Activated CD4-positive, alpha-beta memory T cell treated with anti-CD3 and anti-CD28 coated beads for 36 hours (primary cell): ENCODE measurements at regions of chr1 and their contacts with region 1.

Region 1: DNA sequence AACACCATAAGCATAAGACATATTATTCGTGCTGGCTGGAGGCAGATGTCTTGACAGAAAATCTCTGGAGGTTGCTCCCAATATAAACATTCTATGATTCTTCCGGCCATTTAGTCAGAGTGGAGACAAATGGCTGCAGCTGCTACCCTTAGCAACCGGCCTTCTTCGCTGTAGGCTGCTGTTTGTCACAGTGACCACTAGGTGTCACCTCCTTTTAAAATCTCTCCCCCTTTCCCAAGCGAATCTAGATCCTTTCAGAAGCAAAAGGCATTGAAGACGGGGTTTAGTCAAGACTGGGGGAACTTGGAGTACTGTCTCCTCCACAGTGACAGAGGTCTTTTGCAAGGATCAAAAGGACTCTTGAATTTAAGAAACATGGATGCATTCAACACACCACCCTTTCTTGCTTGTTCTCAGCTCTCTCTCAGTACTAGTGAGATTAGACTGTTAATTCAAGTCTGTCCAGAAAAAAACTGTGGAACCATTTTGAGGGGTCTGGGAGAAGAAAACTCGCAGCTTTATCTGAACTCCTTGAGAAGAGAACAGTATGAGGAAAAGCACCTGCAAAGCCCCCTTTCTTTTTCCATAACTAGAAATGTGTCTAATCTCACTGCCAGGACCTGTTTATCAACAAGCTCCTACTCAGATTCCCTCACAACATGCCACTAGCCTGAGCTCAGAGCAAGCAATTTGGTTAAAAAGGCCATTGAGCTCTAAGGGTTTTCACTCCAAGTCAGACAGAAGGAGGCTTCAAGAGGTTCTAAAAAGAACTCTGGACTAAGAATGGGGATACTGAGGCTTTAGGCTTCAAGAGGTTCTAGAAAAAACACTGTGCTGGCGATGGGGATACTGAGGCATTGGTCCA is 408.3 kb upstream of the PLXNA2 start:
- DNase-seq: peak; percentile 34
- H3K4me3 Mint-ChIP-seq: no peak overlapping the region
- H3K27ac Mint-ChIP-seq: no peak overlapping the region
- H3K4me1 Mint-ChIP-seq: no peaks in the 10 kb centered on the region
- H3K27me3 Mint-ChIP-seq: peaks cover 24% of the 10 kb centered on the region

Region 2: DNA sequence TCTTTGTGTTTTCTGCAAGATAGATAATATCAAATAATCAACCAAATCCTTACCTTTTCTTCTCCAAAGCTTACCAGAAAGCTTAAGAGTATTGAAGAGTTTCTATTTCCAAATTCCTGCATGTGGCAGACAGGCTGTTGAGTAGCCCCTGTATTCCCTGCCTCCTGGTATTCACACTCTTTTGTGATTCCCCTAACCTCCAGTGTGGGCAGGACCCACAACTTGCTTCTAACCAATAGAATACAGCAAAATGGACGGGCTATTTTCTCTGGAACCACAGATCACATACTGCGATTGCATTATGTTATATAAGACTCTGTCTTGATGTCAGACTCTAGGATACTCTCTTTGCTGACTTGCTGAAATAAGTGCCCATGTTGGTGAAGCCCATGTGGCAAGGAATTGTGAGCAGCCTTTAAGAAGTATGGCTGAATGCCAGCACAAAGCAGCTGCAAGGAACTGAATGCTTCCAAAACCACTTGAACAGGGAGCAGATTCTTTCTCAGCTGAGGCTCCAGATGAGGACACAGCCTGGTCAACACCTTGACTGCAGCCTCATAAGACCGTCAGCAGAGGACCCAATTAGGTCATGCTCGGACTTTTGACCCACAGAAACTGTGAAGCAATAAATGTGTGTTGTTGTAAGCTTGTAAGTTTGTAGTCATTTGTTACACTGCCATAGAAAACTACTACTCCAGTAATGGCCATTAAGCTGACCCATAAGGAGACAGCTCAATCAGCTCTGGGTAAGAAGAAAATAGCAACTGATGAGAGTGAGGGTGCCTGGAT is 360.4 kb before region 1 on chr1:
- CTCF ChIA-PET with region 1: no interaction called
- POLR2A ChIA-PET with region 1: no interaction called
- intact Hi-C with region 1: no loop called
- DNase-seq: no peak
- H3K4me3 Mint-ChIP-seq: no peak overlapping the region
- H3K27ac Mint-ChIP-seq: no peak overlapping the region
- H3K4me1 Mint-ChIP-seq: no peaks in the 10 kb centered on the region
- H3K27me3 Mint-ChIP-seq: peaks cover 13% of the 10 kb centered on the region

Region 3: DNA sequence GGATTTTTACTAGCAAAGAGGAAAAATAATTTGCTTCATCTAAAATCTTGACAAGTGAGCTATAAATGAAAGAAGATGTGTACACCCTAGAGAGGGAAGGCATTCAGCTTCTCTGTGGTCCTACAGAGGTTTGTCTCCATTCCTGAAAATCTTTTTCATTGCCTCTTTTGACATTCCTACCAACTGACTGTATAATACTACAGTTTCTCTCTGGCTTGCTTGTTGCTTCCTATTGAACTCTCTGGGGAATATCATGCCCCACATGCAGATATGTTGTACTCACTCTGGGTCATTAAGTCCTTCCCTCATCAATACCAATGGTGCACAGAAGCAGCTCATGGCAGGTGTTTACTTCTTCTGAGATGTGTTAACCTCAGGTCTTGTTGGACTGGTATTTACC is 37.2 kb before region 1 on chr1:
- CTCF ChIA-PET with region 1: no interaction called
- POLR2A ChIA-PET with region 1: no interaction called
- intact Hi-C with region 1: no loop called
- DNase-seq: no peak
- H3K4me3 Mint-ChIP-seq: no peak overlapping the region
- H3K27ac Mint-ChIP-seq: no peak overlapping the region
- H3K4me1 Mint-ChIP-seq: no peaks in the 10 kb centered on the region
- H3K27me3 Mint-ChIP-seq: peaks cover 10% of the 10 kb centered on the region

Region 4: GRCh38 chr1:209190591-209191261 is 538.2 kb after region 1 on chr1:
- CTCF ChIA-PET with region 1: no interaction called
- POLR2A ChIA-PET with region 1: no interaction called
- intact Hi-C with region 1: loop called (anchors 1 kb)
- DNase-seq: peak; percentile 40
- H3K4me3 Mint-ChIP-seq: no peak overlapping the region
- H3K27ac Mint-ChIP-seq: no peak overlapping the region
- H3K4me1 Mint-ChIP-seq: no peaks in the 10 kb centered on the region
- H3K27me3 Mint-ChIP-seq: peaks cover 5% of the 10 kb centered on the region

Region 5: DNA sequence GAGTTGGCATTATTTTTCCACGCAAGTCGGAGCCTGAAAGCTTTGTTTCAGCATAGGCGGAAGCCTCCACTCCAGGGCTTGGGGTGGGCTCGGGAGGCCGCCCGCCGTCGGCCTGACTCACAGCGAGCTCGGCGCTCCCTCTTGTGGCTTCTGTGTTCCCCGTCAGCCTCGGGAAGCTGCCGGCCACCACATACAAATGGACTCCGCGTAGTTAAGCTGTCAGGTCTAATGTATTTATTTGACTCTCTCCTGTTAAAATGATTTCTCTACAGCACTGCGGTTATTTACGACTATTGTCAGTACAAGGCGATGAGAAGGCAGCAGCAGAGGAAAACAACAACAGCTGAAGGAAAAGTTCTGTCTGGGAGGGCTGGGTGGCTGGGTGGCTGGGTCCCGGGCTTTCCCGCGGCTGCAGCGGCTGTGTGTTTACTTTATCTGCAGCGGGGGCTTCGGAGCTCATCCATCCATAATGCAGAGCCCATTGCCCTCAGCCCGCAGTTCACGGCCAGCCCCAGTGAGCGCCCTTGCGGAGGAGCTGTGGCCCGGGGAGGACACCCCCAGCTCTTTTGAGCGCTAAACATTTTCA is 555.3 kb after region 1 on chr1:
- CTCF ChIA-PET with region 1: interaction called, 15 read pairs
- POLR2A ChIA-PET with region 1: no interaction called
- intact Hi-C with region 1: loop called (anchors 5 kb)
- DNase-seq: peak; percentile 39
- H3K4me3 Mint-ChIP-seq: no peak overlapping the region
- H3K27ac Mint-ChIP-seq: no peak overlapping the region
- H3K4me1 Mint-ChIP-seq: peaks cover 5% of the 10 kb centered on the region
- H3K27me3 Mint-ChIP-seq: peaks cover 28% of the 10 kb centered on the region

Region 6: DNA sequence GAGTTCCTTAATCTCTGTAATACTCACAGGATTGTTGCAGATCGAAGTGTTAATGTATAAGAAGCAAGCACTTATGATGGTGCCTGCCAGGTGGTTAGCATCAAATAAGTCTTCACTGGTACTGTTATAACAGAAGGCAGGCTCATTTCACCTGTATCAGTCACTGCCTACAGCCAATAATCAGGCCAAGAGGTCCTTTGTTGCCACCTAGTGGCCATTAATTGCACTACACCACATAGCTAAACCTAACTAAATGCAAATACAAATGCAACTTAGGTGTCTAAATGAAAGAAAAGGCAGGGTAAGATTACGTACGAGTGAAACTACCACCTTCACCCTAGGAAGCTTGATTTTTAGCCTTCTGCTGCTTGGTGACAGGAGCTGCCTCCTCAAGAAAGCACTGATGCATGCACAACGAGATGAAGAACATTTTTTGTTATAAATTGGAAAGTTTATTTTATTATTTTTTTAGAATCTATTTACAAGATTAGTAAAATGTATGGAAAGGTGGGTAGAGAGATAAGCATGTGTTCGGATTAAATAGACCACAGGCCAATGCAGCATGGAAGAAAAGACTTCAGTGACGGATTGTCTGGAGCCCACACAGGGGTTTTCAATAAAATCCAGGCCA is 596.2 kb after region 1 on chr1:
- CTCF ChIA-PET with region 1: interaction called, 16 read pairs
- POLR2A ChIA-PET with region 1: no interaction called
- intact Hi-C with region 1: no loop called
- DNase-seq: peak; percentile 46
- H3K4me3 Mint-ChIP-seq: no peak overlapping the region
- H3K27ac Mint-ChIP-seq: no peak overlapping the region
- H3K4me1 Mint-ChIP-seq: no peaks in the 10 kb centered on the region
- H3K27me3 Mint-ChIP-seq: no peaks in the 10 kb centered on the region